ENCODE measurements at regions of chrX and their contacts with region 1.

Region 1: DNA sequence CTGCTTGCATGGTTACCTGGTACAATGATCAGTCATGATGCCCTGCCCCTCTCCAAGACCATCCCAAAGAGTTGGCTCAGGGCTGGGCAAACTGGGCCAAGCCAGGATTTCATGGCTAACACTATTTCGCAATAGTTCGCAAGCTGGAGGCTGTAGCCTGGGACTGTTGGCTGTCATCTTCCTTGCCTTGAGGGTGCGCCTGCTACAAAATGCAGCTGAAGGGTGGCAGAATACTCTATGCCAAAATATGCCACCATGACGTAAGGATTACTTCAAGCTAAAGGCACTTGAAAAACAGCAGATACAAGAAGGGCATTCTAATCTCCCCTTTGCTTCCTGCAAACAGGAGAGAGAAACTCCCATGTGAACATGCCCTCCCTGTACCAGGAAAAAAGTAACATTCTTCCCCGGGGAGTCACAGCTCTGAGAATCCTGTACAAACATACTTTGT is 21.0 kb downstream of the SAT1 start:
- DNase-seq: peak; percentile 64
- H3K4me3 Mint-ChIP-seq: peak overlapping the region; percentile 57
- H3K27ac Mint-ChIP-seq: peak overlapping the region; percentile 99
- H3K4me1 Mint-ChIP-seq: peaks cover 41% of the 10 kb centered on the region
- H3K27me3 Mint-ChIP-seq: no peaks in the 10 kb centered on the region
- CTCF ChIP-seq: no peak

Region 2: DNA sequence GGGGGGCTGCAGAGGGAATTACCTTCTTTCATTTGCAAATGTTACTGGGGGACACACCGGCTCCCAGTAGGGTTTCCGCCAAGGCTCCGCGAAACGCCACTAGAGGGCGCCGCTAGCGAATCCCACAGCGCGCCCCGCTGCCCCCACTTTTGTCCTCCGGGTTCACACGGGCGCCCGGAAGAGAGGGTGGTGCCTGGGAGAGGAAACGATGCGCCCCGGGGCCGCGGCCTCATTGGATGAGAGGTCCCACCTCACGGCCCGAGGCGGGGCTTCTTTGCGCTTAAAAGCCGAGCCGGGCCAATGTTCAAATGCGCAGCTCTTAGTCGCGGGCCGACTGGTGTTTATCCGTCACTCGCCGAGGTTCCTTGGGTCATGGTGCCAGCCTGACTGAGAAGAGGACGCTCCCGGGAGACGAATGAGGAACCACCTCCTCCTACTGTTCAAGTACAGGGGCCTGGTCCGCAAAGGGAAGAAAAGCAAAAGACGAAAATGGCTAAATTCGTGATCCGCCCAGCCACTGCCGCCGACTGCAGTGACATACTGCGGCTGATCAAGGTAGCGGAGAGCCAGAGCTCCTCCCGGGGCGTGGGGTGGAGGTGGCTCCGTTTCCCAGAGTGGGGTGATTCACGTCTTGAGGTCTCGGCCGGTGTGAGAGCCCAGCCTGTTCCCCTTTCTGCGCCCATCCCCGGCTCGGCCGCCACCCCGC is 20.9 kb before region 1 on chrX and contains the start of gene SAT1:
- CTCF ChIA-PET with region 1: interaction called, 4 read pairs
- intact Hi-C with region 1: loop called (anchors 1 kb)
- DNase-seq: peak; percentile 96
- H3K4me3 Mint-ChIP-seq: peak within 1 kb of the TSS; percentile 81
- H3K27ac Mint-ChIP-seq: peak within 1 kb of the TSS; percentile 93
- H3K4me1 Mint-ChIP-seq: peaks cover 17% of the 10 kb centered on the region
- H3K27me3 Mint-ChIP-seq: no peaks in the 10 kb centered on the region
- CTCF ChIP-seq: peak; percentile 84
- total RNA-seq, gene SAT1: 419 and 426 TPM in 2 replicates

Region 3: DNA sequence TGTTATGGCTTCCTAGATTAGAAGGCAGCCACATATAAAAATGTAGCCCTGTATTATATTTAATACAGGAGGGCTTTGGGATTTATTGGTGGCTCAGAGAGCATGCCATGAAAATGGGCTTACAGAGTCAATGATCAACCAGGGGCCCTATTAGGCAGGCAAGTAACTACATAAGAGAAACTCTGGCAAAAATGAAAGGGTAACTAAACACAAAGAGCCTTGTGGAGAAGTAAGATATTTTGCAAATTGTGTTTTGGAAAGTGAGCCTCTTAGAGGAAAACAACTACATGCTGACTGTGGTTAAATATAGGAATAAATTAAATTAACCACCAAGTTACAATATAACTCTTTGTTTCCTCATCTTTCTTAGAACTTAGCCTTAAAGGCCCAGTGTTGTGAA is 15.4 kb before region 1 on chrX:
- CTCF ChIA-PET with region 1: interaction called, 5 read pairs
- intact Hi-C with region 1: loop called (anchors 2 kb)
- DNase-seq: no peak
- H3K4me3 Mint-ChIP-seq: no peak overlapping the region
- H3K27ac Mint-ChIP-seq: peak overlapping the region; percentile 68
- H3K4me1 Mint-ChIP-seq: peaks cover 7% of the 10 kb centered on the region
- H3K27me3 Mint-ChIP-seq: no peaks in the 10 kb centered on the region
- CTCF ChIP-seq: no peak

Region 4: GRCh38 chrX:23822397-23822796 is 18.4 kb after region 1 on chrX:
- CTCF ChIA-PET with region 1: interaction called, 10 read pairs
- intact Hi-C with region 1: no loop called
- DNase-seq: peak; percentile 28
- H3K4me3 Mint-ChIP-seq: no peak overlapping the region
- H3K27ac Mint-ChIP-seq: peak overlapping the region; percentile 52
- H3K4me1 Mint-ChIP-seq: peaks cover 12% of the 10 kb centered on the region
- H3K27me3 Mint-ChIP-seq: no peaks in the 10 kb centered on the region
- CTCF ChIP-seq: no peak